Transverse colon (tissue), 4 donors: ENCODE measurements at regions of chr22 and their contacts with region 1.

Region 1: GRCh38 chr22:25777870-25778269 is 35.9 kb downstream of the MYO18B start:
- DNase-seq: no peak
- H3K4me3 ChIP-seq: no peak overlapping the region
- H3K27ac ChIP-seq: no peak overlapping the region
- H3K4me1 ChIP-seq: no peaks in the 10 kb centered on the region
- H3K27me3 ChIP-seq: no peaks in the 10 kb centered on the region
- CTCF ChIP-seq: peak in 2 of 5 experiments; percentile 13 to 30
- EP300 ChIP-seq: no peak
- POLR2A ChIP-seq: no peak

Region 2: DNA sequence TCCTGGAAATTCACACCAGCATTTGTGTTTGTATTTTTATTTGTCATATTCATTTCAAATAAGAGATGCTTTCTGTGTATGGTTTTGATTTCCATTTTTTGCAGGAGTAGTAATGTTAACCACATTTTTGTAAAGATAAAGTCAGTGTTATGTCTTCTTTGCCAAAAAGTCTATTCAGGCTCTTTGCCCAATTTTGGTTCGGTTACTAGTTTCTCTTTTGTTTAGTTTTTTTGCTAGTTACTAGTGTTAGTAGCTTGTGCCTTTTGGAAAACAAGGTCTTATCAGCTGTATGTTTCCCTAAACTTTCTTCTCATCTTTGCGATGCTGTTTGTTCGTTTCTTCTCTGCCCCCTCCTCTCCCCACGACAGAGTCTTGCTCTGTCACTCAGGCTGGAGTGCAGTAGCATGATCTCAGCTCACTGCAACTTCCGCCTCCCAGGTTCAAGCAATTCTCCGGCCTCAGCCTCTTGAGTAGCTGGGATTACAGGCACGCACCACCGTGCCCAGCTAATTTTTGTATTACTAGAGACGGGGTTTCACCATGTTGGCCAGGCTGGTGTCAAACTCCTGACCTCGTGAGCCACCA is 325.7 kb before region 1 on chr22:
- in situ Hi-C with region 1: loop called in 1 of 4 experiments (anchors 25 kb)
- intact Hi-C with region 1: no loop called
- DNase-seq: no peak
- H3K4me3 ChIP-seq: no peak overlapping the region
- H3K27ac ChIP-seq: no peak overlapping the region
- H3K4me1 ChIP-seq: peaks cover 6 to 37% (median 12%) of the 10 kb centered on the region in 4 donors
- H3K27me3 ChIP-seq: no peaks in the 10 kb centered on the region
- CTCF ChIP-seq: no peak
- EP300 ChIP-seq: no peak
- POLR2A ChIP-seq: no peak

Region 3: GRCh38 chr22:25880524-25880923 is 102.7 kb after region 1 on chr22:
- in situ Hi-C with region 1: no loop called
- intact Hi-C with region 1: no loop called
- DNase-seq: no peak
- H3K4me3 ChIP-seq: no peak overlapping the region
- H3K27ac ChIP-seq: no peak overlapping the region
- H3K4me1 ChIP-seq: no peaks in the 10 kb centered on the region
- H3K27me3 ChIP-seq: peaks cover 7% of the 10 kb centered on the region
- CTCF ChIP-seq: no peak
- EP300 ChIP-seq: no peak
- POLR2A ChIP-seq: no peak